Activated naive CD4-positive, alpha-beta T cell treated with anti-CD3 and anti-CD28 coated beads for 36 hours (primary cell): ENCODE measurements at regions of chr18 and their contacts with region 1.

Region 1: GRCh38 chr18:77650799-77651385 is 401.2 kb downstream of the GALR1 start:
- DNase-seq: peak; percentile 70
- H3K4me3 Mint-ChIP-seq: no peak overlapping the region
- H3K27ac Mint-ChIP-seq: no peak overlapping the region
- H3K4me1 Mint-ChIP-seq: no peaks in the 10 kb centered on the region
- H3K27me3 Mint-ChIP-seq: peaks cover 18% of the 10 kb centered on the region

Region 2: DNA sequence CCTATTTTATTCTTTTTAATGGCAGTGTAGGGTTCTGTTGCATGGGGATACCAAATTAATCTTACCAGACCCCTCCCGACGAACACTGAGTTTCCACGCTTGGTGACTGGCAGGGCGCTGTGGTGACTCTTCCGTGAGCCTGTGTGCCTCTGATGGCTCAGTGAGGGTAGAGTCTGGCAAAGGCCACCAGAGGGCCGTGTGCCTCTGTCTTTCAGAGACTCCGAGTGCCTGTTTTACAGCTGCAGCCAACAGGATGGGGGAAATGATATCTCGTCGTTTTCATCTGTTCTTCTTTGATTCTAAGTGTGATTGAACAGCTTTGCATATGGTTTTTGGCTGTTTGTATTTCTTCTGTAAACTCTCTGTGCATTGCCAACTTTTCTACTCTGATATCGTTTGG is 728.8 kb before region 1 on chr18:
- CTCF ChIA-PET with region 1: interaction called, 4 read pairs
- intact Hi-C with region 1: loop called (anchors 2 kb)
- DNase-seq: peak; percentile 64
- H3K4me3 Mint-ChIP-seq: no peak overlapping the region
- H3K27ac Mint-ChIP-seq: no peak overlapping the region
- H3K4me1 Mint-ChIP-seq: peaks cover 11% of the 10 kb centered on the region
- H3K27me3 Mint-ChIP-seq: no peaks in the 10 kb centered on the region